Left ventricle myocardium inferior (tissue), 1 donor: ENCODE measurements at regions of chr17 and their contacts with region 1.

Region 1: DNA sequence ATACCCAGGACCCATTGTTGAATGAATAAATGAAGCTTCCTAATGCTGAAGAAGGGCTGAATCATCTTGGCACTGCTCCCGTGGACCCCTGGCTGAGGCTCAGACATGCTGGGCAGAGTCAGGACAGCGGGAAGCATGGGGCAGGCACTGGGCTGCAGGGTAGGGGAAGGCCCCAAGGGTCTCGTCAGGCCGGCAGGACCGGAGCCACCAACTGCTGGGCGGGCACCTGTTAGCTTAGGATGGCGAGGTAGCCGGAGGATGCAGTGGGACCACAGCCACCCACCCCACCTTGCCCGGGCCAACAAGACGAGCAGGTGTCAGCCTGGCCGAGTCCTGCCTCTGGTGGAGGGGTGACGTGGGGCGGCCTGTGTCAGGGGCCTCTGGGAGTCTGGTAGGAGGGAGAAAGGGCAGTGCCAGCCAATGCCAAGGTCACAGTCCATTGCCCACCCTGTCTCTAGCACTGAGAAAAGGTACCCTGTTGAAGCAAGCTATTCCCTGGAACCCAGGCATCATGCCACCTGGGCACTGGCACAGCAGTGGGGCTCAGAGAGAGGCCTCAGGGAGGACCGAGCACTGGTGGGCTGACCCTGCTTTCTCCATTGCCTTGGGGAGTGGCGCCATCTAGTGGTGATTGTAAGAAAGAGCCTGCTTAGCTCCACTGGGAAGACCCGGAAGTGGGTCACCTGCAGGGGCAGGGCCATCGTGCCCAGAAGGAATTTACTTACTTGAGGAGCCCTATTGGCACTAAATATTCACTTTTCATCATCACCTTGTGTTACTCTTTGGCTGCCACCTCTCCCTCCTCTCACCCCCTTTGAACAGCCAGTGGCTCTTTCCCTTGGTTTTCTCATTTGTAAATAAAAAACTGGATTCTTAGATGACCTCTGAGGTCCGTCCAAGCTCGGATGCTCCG is 3.0 kb upstream of the DLX3 start:
- DNase-seq: peak; percentile 60
- H3K4me3 ChIP-seq: no peak overlapping the region
- H3K27ac ChIP-seq: no peak overlapping the region
- H3K4me1 ChIP-seq: peaks cover 37% of the 10 kb centered on the region
- H3K27me3 ChIP-seq: peaks cover 100% of the 10 kb centered on the region
- CTCF ChIP-seq: peak; percentile 94

Region 2: DNA sequence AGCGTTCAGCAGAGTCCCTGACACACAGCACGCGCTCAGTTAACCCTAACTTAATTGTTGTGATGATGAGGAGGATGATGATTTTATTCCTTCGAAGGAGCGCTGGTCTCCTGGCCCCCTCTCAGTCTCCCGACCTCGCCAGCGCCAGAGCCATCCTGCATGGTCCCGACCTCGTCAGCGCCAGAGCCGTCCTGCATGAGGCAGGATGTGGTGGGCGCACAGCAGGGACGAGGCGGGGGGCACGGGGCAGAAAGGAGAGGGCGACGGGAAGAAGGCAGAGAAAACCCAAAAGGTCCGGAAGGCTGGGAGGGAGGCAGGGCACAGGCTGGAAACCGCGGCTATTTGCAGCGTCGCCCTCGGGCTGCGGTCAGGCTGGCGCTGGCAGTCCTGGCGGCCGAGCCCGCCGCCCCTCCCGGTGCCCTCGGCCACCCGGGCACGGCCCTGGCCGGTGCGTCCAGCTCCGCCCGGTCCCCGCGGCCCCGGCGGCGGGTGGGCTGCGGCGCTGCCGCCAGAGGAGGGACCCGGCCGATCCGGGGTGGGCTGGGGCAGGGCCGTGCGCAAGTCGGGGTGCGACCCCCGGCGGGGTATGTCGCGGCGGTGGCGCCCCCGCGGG is 147.2 kb before region 1 on chr17:
- intact Hi-C with region 1: no loop called
- DNase-seq: no peak
- H3K4me3 ChIP-seq: peak overlapping the region; percentile 71
- H3K27ac ChIP-seq: peak overlapping the region; percentile 57
- H3K4me1 ChIP-seq: peaks cover 36% of the 10 kb centered on the region
- H3K27me3 ChIP-seq: no peaks in the 10 kb centered on the region
- CTCF ChIP-seq: no peak

Region 3: DNA sequence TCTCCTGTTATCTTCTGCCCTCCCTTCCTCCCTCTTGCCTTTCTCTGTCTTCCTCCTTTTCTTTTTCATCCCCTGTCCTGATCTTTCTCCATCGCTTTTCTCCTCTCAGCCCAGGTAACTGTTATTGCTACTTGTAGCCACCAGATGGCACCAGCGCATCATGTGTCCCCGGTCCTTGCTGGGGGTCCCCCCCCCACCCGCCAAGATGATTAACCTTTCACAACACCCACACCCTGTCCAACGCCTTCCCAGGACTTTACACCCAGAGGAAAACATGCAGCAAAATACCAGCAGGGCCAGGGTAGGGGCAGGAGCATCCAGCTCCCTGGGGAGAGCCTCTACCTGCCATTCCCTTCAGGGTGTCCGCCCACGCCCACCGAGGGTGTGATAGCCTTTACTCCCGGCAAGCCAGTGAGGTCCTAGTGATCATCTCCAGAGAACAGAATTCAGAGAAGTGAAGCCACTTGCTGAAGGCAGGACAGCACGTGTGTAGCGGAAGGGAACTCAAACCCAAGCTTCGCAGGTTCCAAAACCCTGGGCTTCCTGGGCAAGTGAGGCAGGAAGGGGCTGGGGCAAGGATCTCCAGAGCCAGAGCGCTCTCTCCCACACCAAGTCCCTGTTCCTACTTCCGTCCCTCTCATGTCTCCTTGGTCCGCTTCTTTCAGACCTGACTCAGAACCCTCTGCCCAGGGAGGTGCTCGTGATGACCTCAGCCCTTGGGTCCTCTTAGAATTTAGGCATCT is 136.7 kb before region 1 on chr17:
- intact Hi-C with region 1: loop called (anchors 5 kb)
- DNase-seq: no peak
- H3K4me3 ChIP-seq: no peak overlapping the region
- H3K27ac ChIP-seq: no peak overlapping the region
- H3K4me1 ChIP-seq: peaks cover 7% of the 10 kb centered on the region
- H3K27me3 ChIP-seq: peaks cover 18% of the 10 kb centered on the region
- CTCF ChIP-seq: peak; percentile 88

Region 4: DNA sequence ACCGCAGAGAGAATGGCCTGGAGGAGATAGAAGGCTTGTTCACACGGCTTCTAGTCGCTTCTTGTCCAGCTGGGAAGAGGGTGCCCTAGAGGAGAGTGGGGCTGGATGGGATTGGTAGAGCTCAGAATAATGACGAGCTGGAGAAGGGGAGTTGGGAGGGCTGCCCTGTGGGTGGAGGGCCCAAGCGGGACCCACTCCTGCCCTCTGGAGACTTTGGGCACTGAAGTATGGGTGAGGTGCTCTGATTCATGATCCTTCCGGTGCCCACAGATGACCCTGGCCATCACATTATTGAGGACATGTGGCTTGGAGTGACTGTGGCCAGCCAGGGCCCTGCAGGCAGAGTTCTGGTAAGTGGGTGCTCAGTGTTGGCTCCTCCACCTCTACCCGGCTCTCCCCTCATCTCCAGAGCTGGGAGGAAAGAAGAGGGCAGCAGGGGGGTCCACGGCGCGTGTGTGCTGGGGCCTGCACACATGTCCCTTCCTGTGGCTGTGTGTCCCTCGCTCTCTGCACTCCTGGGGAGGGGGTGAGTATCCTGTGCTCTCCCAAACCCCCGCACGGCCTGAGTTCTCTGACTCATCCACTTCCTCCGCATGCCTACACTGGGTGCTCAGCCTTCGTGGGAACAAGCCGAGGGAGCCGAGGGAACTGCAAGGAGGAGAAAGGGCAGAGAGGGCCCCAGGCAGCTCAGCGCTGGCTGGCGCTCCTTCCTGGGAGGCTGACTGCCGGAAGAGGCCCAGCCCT is 66.4 kb after region 1 on chr17:
- intact Hi-C with region 1: no loop called
- DNase-seq: no peak
- H3K4me3 ChIP-seq: no peak overlapping the region
- H3K27ac ChIP-seq: peak overlapping the region; percentile 91
- H3K4me1 ChIP-seq: peaks cover 85% of the 10 kb centered on the region
- H3K27me3 ChIP-seq: no peaks in the 10 kb centered on the region
- CTCF ChIP-seq: no peak

Region 5: DNA sequence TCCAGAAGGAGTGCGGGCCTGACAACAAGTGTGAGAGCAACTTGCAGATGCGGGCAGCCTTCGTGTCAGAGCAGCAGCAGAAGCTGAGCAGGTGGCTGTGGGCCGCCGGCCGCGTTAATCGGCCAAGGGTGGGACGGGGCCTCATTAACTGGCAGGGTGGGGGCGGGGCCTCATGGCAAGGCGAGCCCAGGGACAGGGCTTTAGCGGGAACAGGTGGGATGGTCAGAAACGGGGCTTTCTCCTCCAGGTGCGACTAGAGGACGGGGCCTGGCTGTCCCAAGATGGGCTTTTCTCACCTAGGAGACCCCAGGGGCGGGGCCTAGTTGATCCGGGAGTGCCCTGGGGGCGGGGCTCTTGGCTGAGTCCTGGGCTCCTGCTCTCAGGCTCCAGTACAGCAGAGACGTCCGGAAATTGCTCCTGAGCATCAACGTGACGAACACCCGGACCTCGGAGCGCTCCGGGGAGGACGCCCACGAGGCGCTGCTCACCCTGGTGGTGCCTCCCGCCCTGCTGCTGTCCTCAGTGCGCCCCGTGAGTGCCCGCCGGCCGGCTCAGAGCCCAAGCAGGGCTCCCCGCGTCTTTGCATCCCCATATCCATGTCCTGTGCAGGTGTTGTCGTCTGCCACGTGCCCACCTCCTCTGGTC is 78.7 kb after region 1 on chr17:
- intact Hi-C with region 1: no loop called
- DNase-seq: no peak
- H3K4me3 ChIP-seq: no peak overlapping the region
- H3K27ac ChIP-seq: no peak overlapping the region
- H3K4me1 ChIP-seq: peaks cover 24% of the 10 kb centered on the region
- H3K27me3 ChIP-seq: no peaks in the 10 kb centered on the region
- CTCF ChIP-seq: no peak

Region 6: DNA sequence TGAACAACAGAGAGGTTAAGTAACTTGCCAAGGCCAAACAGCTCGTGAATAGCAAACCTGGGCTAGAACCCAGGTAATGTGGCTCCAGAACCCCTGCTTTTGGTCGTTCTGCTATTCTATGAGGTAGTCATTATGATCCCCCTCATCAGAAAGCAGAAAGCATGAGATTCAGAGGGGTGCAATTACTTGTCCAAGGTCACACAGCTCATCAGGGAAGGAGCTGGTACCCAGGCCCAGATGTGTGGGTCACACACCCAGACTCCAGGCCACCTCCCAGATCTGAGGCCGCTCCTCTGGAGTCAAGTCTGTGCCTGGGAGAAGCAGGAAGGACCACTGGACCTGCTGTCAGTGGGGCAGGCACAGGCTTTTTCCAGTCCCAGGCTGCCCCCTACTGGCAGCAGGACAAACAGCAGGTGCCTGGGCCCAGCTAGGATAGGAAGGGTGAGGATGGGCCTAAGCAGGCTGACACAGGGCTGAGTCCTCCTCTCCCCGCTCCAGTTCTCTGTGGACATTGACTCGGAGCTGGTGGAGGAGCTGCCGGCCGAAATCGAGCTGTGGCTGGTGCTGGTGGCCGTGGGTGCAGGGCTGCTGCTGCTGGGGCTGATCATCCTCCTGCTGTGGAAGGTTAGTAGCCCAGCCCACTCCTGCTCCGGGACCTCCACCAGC is 89.3 kb after region 1 on chr17:
- intact Hi-C with region 1: no loop called
- DNase-seq: peak; percentile 74
- H3K4me3 ChIP-seq: no peak overlapping the region
- H3K27ac ChIP-seq: no peak overlapping the region
- H3K4me1 ChIP-seq: no peaks in the 10 kb centered on the region
- H3K27me3 ChIP-seq: no peaks in the 10 kb centered on the region
- CTCF ChIP-seq: peak; percentile 98